Endothelial cell of umbilical vein (primary cell): ENCODE measurements at regions of chr5 and their contacts with region 1.

Region 1: GRCh38 chr5:121049971-121050370 is 585.9 kb downstream of the PRR16 start:
- DNase-seq: no peak
- H3K4me3 ChIP-seq: no peak overlapping the region
- H3K27ac ChIP-seq: no peak overlapping the region
- H3K4me1 ChIP-seq: no peaks in the 10 kb centered on the region
- H3K27me3 ChIP-seq: no peaks in the 10 kb centered on the region
- CTCF ChIP-seq: no peak
- POLR2A ChIP-seq: no peak

Region 2: DNA sequence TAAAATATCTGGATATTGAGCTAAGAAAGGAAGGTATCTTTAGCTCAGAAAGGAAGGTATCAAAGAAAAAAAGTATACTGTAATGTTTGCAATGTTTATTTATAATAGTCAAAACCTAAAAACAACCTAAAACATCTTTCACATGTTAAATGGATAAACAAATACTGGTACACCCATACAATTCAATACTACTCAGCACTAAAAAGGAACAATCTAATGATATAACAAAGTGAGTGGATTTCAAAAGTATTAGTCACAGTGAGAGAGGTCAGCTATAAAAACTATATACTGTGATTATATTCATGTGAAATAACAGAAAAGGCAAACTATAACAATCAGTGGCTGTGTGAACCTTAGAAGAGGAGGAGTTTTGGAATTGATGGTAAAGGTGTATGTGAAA is 346.7 kb after region 1 on chr5:
- CTCF ChIA-PET with region 1: no interaction called
- POLR2A ChIA-PET with region 1: no interaction called
- dilution Hi-C with region 1: no loop called
- intact Hi-C with region 1: loop called (anchors 1 kb)
- DNase-seq: no peak
- H3K4me3 ChIP-seq: no peak overlapping the region
- H3K27ac ChIP-seq: no peak overlapping the region
- H3K4me1 ChIP-seq: no peaks in the 10 kb centered on the region
- H3K27me3 ChIP-seq: no peaks in the 10 kb centered on the region
- CTCF ChIP-seq: no peak
- POLR2A ChIP-seq: no peak